ENCODE measurements at regions of chr2 and their contacts with region 1.

Region 1: DNA sequence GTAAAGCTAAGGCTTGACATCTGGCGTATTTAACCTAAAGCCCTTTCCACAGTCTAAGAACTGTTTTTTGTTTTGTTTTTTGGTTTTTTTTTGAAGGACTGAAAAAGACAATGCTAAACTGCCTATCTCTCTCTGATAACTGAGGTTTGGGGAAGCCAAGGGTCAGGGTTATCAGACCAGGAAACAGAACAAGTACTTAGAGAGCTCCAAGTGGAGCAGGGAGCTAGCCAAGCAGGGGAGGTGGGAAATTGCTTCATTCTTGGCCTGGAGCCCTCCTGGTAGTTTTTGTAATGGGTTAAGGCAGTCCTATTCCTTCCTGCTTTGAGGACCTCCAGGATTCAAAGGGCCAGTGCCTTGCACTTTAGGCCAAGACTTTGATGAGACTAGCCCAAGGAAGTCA is 154.3 kb upstream of the LTBP1 start:
- DNase-seq: no peak
- ATAC-seq: no peak
- H3K4me3 ChIP-seq: no peak overlapping the region
- H3K27ac ChIP-seq: no peak overlapping the region
- H3K4me1 ChIP-seq: no peaks in the 10 kb centered on the region
- H3K27me3 ChIP-seq: no peaks in the 10 kb centered on the region
- CTCF ChIP-seq: no peak

Region 2: DNA sequence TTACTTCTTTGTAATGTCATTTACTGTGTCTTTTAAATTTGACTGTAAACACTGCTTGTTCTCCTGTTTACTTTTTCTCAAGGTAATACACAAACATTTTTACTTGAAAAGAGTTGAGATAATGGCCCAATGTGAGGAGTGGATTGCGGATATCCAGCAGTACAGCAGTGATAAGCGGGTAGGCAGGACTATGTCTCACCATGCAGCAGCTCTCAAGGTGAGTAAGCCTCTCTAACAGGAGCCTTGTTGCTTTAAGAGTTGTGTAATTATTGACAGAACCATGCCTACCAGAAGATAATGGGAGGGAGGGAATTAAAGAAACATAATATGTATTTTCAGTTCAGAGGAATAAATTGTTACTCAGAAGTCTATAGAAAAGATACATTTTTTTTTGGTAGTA is 181.1 kb before region 1 on chr2:
- CTCF ChIA-PET with region 1: no interaction called
- POLR2A ChIA-PET with region 1: no interaction called
- in situ Hi-C with region 1: no loop called
- intact Hi-C with region 1: no loop called
- DNase-seq: no peak
- ATAC-seq: no peak
- H3K4me3 ChIP-seq: no peak overlapping the region
- H3K27ac ChIP-seq: no peak overlapping the region
- H3K4me1 ChIP-seq: no peaks in the 10 kb centered on the region
- H3K27me3 ChIP-seq: no peaks in the 10 kb centered on the region
- CTCF ChIP-seq: no peak

Region 3: GRCh38 chr2:32678825-32679224 is 113.6 kb before region 1 on chr2:
- CTCF ChIA-PET with region 1: no interaction called
- POLR2A ChIA-PET with region 1: no interaction called
- in situ Hi-C with region 1: no loop called
- intact Hi-C with region 1: no loop called
- DNase-seq: no peak
- ATAC-seq: no peak
- H3K4me3 ChIP-seq: no peak overlapping the region
- H3K27ac ChIP-seq: no peak overlapping the region
- H3K4me1 ChIP-seq: no peaks in the 10 kb centered on the region
- H3K27me3 ChIP-seq: no peaks in the 10 kb centered on the region
- CTCF ChIP-seq: no peak

Region 4: DNA sequence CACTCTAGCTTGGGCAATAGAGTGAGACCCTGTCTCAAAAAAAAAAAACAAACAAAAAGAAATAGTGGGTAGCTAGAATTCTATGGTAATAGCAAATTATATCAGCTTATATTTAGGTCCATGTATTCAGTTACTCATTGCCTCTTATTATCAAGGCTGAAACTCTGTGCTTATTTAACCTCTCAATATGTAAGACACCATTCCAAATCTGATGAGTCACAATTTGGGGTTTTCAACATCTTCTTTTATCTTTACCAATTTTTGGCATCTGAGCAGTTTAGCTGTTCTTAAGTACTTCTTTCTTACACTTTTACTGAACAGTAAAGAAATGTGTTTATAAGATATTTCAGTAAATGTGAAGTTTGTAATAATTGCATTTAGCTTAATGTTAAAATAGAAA is 95.3 kb before region 1 on chr2:
- CTCF ChIA-PET with region 1: interaction called, 15 read pairs
- POLR2A ChIA-PET with region 1: no interaction called
- in situ Hi-C with region 1: no loop called
- intact Hi-C with region 1: no loop called
- DNase-seq: no peak
- ATAC-seq: no peak
- H3K4me3 ChIP-seq: no peak overlapping the region
- H3K27ac ChIP-seq: no peak overlapping the region
- H3K4me1 ChIP-seq: no peaks in the 10 kb centered on the region
- H3K27me3 ChIP-seq: no peaks in the 10 kb centered on the region
- CTCF ChIP-seq: no peak

Region 5: GRCh38 chr2:32732912-32733472 is 59.4 kb before region 1 on chr2:
- CTCF ChIA-PET with region 1: no interaction called
- POLR2A ChIA-PET with region 1: no interaction called
- in situ Hi-C with region 1: no loop called
- intact Hi-C with region 1: no loop called
- DNase-seq: no peak
- ATAC-seq: no peak
- H3K4me3 ChIP-seq: no peak overlapping the region
- H3K27ac ChIP-seq: no peak overlapping the region
- H3K4me1 ChIP-seq: no peaks in the 10 kb centered on the region
- H3K27me3 ChIP-seq: no peaks in the 10 kb centered on the region
- CTCF ChIP-seq: no peak

Region 6: GRCh38 chr2:33378556-33379210 is 586.3 kb after region 1 on chr2:
- CTCF ChIA-PET with region 1: interaction called, 13 read pairs
- POLR2A ChIA-PET with region 1: no interaction called
- in situ Hi-C with region 1: no loop called
- intact Hi-C with region 1: no loop called
- DNase-seq: no peak
- ATAC-seq: peak; percentile 68; the same call in 1 of the 2 replicates
- H3K4me3 ChIP-seq: no peak overlapping the region
- H3K27ac ChIP-seq: no peak overlapping the region
- H3K4me1 ChIP-seq: no peaks in the 10 kb centered on the region
- H3K27me3 ChIP-seq: no peaks in the 10 kb centered on the region
- CTCF ChIP-seq: no peak

Measured in Panc1 (cell line).